ENCODE measurements at regions of chr19 and their contacts with region 1.

Region 1: DNA sequence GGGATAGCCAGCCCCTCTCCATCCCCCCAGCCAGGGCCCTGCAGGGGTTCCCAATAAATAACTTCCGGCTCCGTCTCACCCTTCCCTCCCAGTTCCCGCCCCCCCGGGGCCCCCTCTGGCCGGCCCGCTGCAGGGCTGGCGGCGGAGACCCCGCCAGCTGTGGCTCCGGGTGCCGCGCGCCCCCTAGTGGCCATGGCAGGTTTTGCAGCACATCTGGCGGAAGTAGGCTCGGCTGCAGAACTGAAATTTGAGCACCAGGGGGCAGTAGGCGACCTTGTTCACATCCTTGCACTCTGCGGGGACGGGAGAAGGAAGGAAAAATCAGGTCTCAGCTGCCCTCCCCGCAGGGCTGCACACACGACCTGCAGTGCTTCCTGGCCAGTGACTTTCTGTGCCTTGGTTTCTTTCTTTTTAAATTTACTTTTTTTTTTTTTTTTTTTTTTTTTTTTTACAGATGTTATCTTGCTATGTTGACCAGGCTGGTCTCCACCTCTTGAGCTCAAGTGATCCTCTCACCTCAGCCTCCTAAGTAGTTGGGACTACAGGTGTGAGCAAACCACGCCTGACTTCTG is 3.6 kb upstream of the MYO1F start:
- DNase-seq: peak; percentile 89
- H3K4me3 Mint-ChIP-seq: no peak overlapping the region
- H3K27ac Mint-ChIP-seq: no peak overlapping the region
- H3K4me1 Mint-ChIP-seq: peaks cover 45% of the 10 kb centered on the region
- H3K27me3 Mint-ChIP-seq: peaks cover 7% of the 10 kb centered on the region

Region 2: GRCh38 chr19:8412783-8413628 is 167.8 kb before region 1 on chr19 and contains the start of gene MARCHF2:
- CTCF ChIA-PET with region 1: interaction called, 10 read pairs
- DNase-seq: peak; percentile 96
- H3K4me3 Mint-ChIP-seq: peak within 1 kb of the TSS; percentile 66
- H3K27ac Mint-ChIP-seq: peak within 1 kb of the TSS; percentile 17
- H3K4me1 Mint-ChIP-seq: peaks cover 10% of the 10 kb centered on the region
- H3K27me3 Mint-ChIP-seq: peaks cover 8% of the 10 kb centered on the region

Region 3: GRCh38 chr19:8513687-8514504 is 66.9 kb before region 1 on chr19 and contains the start of gene ZNF414:
- CTCF ChIA-PET with region 1: interaction called, 82 read pairs
- DNase-seq: peak; percentile 97
- H3K4me3 Mint-ChIP-seq: peak within 1 kb of the TSS; percentile 84
- H3K27ac Mint-ChIP-seq: peak within 1 kb of the TSS; percentile 97
- H3K4me1 Mint-ChIP-seq: peaks cover 59% of the 10 kb centered on the region
- H3K27me3 Mint-ChIP-seq: no peaks in the 10 kb centered on the region

Region 4: DNA sequence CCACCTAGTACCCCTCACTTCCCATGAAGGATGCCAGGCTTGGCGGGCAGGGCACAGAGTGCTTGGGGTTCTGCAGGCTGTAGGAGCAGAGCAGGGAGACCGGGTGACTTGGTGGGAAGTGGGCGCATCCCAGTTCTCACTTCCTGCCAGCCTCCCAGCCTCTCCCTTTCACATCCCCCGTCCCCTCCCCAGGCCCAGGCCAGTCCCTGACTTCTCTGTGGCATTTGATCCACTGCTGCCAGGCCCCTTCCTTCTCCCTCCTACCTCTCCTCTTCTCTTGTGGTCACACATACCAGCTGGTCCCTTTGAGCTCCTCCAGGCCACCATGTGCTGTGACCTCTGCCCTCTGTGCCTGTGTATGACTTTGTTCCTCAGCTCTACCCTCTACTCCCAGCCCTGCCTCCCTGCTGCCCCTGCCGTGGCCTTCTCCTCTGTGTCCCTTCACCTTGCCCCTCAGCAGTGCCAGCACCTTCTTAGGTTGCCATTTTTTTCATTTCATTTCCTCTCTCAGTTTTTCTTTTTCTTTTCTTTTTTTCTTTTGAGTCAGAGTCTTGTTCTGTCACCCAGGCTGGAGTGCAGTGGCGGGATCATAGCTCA is 23.1 kb before region 1 on chr19:
- CTCF ChIA-PET with region 1: interaction called, 28 read pairs
- DNase-seq: no peak
- H3K4me3 Mint-ChIP-seq: no peak overlapping the region
- H3K27ac Mint-ChIP-seq: peak overlapping the region; percentile 87
- H3K4me1 Mint-ChIP-seq: peaks cover 43% of the 10 kb centered on the region
- H3K27me3 Mint-ChIP-seq: no peaks in the 10 kb centered on the region

Region 5: GRCh38 chr19:8592231-8593009 is 11.6 kb after region 1 on chr19:
- CTCF ChIA-PET with region 1: interaction called, 12 read pairs
- DNase-seq: peak; percentile 83
- H3K4me3 Mint-ChIP-seq: peak overlapping the region; percentile 59
- H3K27ac Mint-ChIP-seq: no peak overlapping the region
- H3K4me1 Mint-ChIP-seq: peaks cover 15% of the 10 kb centered on the region
- H3K27me3 Mint-ChIP-seq: peaks cover 40% of the 10 kb centered on the region

Region 6: DNA sequence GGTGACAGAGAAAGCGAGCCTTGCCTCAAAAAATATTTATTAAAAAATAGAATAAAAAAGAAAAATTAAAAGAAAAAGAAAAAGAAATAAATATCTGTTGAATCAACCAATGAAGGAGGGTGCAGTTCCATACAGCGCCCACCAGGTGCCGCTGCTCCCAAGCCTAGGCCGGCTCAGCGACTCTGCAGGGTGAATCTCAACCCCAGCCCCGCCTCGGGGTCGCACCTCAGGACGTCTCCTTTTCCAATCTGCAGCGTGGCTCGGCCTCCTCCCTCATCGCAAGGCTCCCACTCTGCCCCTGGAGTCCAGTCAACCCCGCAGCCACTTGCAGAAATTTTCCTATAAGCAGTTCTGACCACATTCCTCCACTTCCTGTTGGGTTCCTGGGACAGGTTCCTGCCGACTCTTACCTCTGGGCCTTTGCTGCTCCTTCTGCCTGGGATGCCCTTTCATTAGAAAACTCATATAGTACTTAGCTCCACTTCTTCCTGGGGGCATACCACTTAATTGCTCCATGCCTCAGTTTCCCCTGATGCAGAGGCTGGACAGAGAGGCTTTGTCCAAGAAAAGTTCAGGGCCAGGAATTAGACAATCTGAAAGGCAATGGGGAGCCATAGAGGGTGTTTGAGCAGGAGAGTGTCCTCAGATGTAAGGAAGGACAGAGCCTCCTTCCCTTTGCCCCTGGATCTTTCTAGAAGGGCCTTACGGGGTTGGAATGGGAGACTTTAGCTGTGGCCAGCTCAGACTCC is 74.0 kb after region 1 on chr19:
- CTCF ChIA-PET with region 1: no interaction called
- DNase-seq: peak; percentile 75
- H3K4me3 Mint-ChIP-seq: no peak overlapping the region
- H3K27ac Mint-ChIP-seq: peak overlapping the region; percentile 11
- H3K4me1 Mint-ChIP-seq: peaks cover 38% of the 10 kb centered on the region
- H3K27me3 Mint-ChIP-seq: peaks cover 60% of the 10 kb centered on the region

Measured in activated naive CD4-positive, alpha-beta T cell treated with anti-CD3 and anti-CD28 coated beads, Interleukin-2, amount 10 ng/mL, durations not matched to agents 7 days and 5 days (primary cell).